Natural killer cell (primary cell): ENCODE measurements at regions of chr6 and their contacts with region 1.

Region 1: GRCh38 chr6:157756708-157757429 is 66.2 kb upstream of the SNX9 start:
- DNase-seq: peak; percentile 71 to 89
- ATAC-seq: peak; percentile 81 to 94 (median 93)
- H3K4me3 ChIP-seq: no peak overlapping the region
- H3K4me3 Mint-ChIP-seq: no peak overlapping the region
- H3K27ac ChIP-seq: no peak overlapping the region
- H3K27ac Mint-ChIP-seq: no peak overlapping the region
- H3K4me1 ChIP-seq: peaks cover 11% of the 10 kb centered on the region
- H3K4me1 Mint-ChIP-seq: peaks cover 4 to 10% of the 10 kb centered on the region in 2 donors
- H3K27me3 ChIP-seq: no peaks in the 10 kb centered on the region
- H3K27me3 Mint-ChIP-seq: peaks cover 29 to 66% of the 10 kb centered on the region in 2 donors
- CTCF ChIP-seq: peak; percentile 79

Region 2: GRCh38 chr6:157629220-157629619 is 127.6 kb before region 1 on chr6:
- intact Hi-C with region 1: no loop called
- DNase-seq: peak in 1 of 2 donors; percentile 9
- ATAC-seq: no peak
- H3K4me3 ChIP-seq: no peak overlapping the region
- H3K4me3 Mint-ChIP-seq: no peak overlapping the region
- H3K27ac ChIP-seq: no peak overlapping the region
- H3K27ac Mint-ChIP-seq: no peak overlapping the region
- H3K4me1 ChIP-seq: no peaks in the 10 kb centered on the region
- H3K4me1 Mint-ChIP-seq: no peaks in the 10 kb centered on the region
- H3K27me3 ChIP-seq: no peaks in the 10 kb centered on the region
- H3K27me3 Mint-ChIP-seq: no peaks in the 10 kb centered on the region
- CTCF ChIP-seq: no peak

Region 3: GRCh38 chr6:157873735-157874344 is 117.0 kb after region 1 on chr6:
- intact Hi-C with region 1: loop called (anchors 1 kb)
- DNase-seq: peak; percentile 60 to 87
- ATAC-seq: peak; percentile 65 to 83 (median 77)
- H3K4me3 ChIP-seq: no peak overlapping the region
- H3K4me3 Mint-ChIP-seq: no peak overlapping the region
- H3K27ac ChIP-seq: no peak overlapping the region
- H3K27ac Mint-ChIP-seq: no peak overlapping the region
- H3K4me1 ChIP-seq: peaks cover 3% of the 10 kb centered on the region
- H3K4me1 Mint-ChIP-seq: no peaks in the 10 kb centered on the region
- H3K27me3 ChIP-seq: no peaks in the 10 kb centered on the region
- H3K27me3 Mint-ChIP-seq: peaks cover 8 to 17% of the 10 kb centered on the region in 2 donors
- CTCF ChIP-seq: peak; percentile 68

Region 4: GRCh38 chr6:157946865-157947532 is 190.1 kb after region 1 on chr6:
- intact Hi-C with region 1: loop called (anchors 1 kb)
- DNase-seq: peak in 1 of 2 donors; percentile 59
- ATAC-seq: peak; percentile 52 to 82 (median 70)
- H3K4me3 ChIP-seq: no peak overlapping the region
- H3K4me3 Mint-ChIP-seq: no peak overlapping the region
- H3K27ac ChIP-seq: no peak overlapping the region
- H3K27ac Mint-ChIP-seq: no peak overlapping the region
- H3K4me1 ChIP-seq: no peaks in the 10 kb centered on the region
- H3K4me1 Mint-ChIP-seq: no peaks in the 10 kb centered on the region
- H3K27me3 ChIP-seq: no peaks in the 10 kb centered on the region
- H3K27me3 Mint-ChIP-seq: peaks cover 4 to 12% of the 10 kb centered on the region in 2 donors
- CTCF ChIP-seq: peak; percentile 45